Right ventricle myocardium inferior (tissue), 1 donor: ENCODE measurements at regions of chr20 and their contacts with region 1.

Region 1: DNA sequence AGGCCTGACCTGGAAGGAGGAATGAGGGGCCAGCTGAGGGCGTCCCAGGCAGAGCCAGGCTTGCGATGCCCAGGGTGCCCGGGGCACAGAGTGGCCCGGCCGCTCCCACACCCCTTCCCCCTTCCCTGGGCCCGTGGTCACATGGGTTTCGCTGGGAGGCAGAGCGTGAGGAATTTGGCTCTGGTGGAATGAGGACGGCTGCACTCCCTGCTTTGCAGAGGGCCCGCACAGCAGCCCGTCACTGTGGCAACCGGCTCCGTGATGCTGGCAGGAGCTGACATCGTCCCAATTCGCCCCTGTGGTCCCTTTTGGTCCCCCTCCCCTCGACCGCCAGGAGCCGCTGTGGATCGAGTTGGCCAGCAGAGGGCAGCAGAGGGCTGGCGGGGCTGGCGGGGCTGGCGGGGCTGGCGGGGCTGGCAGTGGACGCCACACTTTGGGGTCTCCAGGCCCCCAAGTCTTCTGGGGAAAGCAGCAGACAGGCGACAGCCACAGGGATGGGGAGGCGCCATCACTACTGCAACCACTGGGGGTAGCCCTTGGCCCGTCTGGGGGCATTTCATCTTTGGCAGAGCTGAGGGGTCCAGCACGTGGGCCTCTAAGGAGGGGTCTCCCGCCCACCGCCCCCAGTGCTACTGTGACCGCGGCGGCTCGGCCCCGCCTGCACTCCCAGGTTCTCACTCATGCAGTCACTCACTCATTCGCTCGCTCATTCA is 49.6 kb upstream of the BHLHE23 start:
- DNase-seq: no peak
- ATAC-seq: no peak

Region 2: DNA sequence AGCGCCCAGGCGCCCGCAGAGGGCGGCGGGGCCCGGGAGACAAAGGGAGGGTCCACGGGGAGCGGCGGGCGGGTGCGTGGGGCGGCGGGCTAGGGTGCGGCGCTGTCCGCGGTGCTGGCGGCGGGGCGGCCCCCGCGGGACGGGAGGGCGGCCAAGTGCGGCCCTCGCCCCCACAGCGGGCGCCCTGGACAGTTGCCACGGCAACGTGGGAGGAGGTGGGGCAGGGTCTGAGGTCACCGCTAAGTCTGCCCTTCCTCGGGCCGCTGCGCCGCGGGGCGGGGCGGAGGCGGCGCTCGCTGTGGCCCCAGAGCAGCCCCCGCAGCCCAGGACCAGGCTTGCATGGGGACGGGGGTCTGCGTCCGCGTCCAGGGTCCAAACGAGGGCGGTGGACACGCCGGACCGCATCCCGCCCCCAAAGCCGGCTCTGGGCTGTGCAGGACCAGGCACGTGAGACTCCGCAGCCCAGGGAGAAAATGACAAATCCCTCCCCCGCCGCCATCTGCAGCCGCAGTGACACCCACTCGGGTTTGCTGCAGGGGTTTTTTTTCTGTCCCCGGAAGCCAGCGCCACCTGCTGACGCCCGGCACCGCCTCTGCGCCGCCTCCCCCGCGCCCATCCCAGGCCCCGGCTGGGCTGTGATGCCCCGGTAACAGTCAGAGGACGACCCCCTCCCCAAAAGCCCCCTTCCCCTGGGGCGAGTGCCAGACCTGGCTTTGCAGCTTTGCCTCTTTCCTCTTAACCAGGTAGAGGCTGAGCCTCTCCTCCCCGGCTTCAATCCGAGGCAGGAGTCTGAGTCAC is 122.7 kb after region 1 on chr20:
- intact Hi-C with region 1: loop called (anchors 1 kb)
- DNase-seq: no peak
- ATAC-seq: peak; percentile 52

Region 3: DNA sequence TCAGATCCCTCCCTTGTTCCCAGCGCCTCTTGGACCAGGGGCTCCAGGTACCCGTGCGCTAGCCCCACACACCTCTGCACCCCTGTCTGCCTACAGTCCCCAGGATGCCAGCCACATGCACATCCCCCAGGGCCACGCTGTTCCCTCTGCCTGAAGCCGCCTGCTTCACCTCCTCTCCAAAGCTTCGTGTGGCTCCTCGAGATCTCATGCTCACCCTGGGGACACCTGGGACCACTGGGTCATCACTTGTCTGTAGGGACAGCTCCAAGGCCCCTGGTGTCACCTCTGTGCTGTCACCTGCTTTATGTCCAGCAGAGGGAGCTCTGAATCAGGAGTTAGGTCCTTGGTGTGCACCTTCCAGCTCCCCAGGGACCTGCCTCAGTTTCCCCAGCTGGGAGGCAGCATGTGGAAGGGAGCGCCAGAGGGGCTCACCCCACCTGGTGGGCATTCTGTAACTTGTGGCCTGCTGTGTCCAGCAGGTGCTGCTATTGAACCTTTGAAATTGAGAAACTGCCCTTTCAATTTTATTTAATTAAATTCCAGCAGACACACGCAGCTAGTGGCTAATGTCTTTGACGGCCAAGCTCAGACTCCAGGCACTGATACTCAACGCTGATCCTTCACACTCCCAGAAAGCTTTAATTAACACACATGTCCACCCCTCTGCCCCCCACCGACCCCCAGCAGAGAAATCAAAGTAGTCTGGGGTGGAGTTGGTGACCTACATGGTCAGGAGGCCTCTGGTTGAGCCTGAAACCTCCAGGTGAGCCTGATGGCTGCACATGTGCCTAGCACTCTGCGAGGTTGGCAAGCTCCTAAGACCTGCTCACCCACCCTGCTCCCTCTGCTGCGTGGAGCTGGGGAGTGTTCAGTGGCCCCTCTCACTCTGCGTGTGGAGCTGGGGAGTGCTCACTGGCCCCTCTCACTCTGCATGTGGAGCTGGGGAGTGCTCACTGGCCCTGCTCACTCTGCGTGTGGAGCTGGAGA is 167.1 kb after region 1 on chr20:
- intact Hi-C with region 1: loop called (anchors 10 kb)
- DNase-seq: no peak
- ATAC-seq: no peak